ENCODE measurements at regions of chr3 and their contacts with region 1.

Region 1: GRCh38 chr3:171915275-171915674 is 72.1 kb downstream of the TMEM212 start:
- DNase-seq: no peak
- H3K4me3 ChIP-seq: no peak overlapping the region
- H3K27ac ChIP-seq: no peak overlapping the region
- H3K4me1 ChIP-seq: no peaks in the 10 kb centered on the region
- H3K27me3 ChIP-seq: no peaks in the 10 kb centered on the region
- CTCF ChIP-seq: no peak

Region 2: DNA sequence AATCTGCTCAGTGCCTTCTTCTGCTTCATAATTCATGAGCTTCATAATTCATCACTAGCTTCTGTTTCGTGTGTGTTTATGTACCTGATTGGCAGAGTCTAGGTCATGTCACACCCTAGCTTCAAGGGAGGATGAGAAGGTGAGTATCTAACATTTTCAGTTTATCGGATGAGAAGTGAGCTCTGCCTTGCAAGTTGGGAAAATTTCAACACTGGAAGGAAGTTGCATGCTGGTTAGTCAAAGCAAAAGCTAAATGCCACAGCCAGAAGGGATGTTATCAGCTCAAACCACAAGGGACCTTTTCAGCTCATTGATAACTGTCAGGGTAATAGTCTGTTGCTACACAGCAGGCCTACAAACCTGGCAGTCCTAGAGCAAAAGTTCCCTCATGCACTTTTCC is 615.3 kb after region 1 on chr3:
- CTCF ChIA-PET with region 1: no interaction called
- POLR2A ChIA-PET with region 1: interaction called, 11 read pairs
- intact Hi-C with region 1: no loop called
- DNase-seq: no peak
- H3K4me3 ChIP-seq: no peak overlapping the region
- H3K27ac ChIP-seq: no peak overlapping the region
- H3K4me1 ChIP-seq: no peaks in the 10 kb centered on the region
- H3K27me3 ChIP-seq: no peaks in the 10 kb centered on the region
- CTCF ChIP-seq: no peak